Right cardiac atrium (tissue), 5 donors: ENCODE measurements at regions of chr1 and their contacts with region 1.

Region 1: GRCh38 chr1:3403388-3404231 is 50.9 kb upstream of the ARHGEF16 start:
- DNase-seq: peak in 1 of 3 donors; percentile 40
- ATAC-seq: no peak
- H3K4me3 ChIP-seq: no peak overlapping the region
- H3K27ac ChIP-seq: no peak overlapping the region
- H3K4me1 ChIP-seq: no peaks in the 10 kb centered on the region
- H3K27me3 ChIP-seq: no peaks in the 10 kb centered on the region

Region 2: GRCh38 chr1:2882968-2883696 is 520.5 kb before region 1 on chr1:
- intact Hi-C with region 1: loop called in 1 of 4 experiments (anchors 10 kb)
- DNase-seq: no peak
- ATAC-seq: no peak
- H3K4me3 ChIP-seq: no peak overlapping the region
- H3K27ac ChIP-seq: no peak overlapping the region
- H3K4me1 ChIP-seq: no peaks in the 10 kb centered on the region
- H3K27me3 ChIP-seq: no peaks in the 10 kb centered on the region

Region 3: DNA sequence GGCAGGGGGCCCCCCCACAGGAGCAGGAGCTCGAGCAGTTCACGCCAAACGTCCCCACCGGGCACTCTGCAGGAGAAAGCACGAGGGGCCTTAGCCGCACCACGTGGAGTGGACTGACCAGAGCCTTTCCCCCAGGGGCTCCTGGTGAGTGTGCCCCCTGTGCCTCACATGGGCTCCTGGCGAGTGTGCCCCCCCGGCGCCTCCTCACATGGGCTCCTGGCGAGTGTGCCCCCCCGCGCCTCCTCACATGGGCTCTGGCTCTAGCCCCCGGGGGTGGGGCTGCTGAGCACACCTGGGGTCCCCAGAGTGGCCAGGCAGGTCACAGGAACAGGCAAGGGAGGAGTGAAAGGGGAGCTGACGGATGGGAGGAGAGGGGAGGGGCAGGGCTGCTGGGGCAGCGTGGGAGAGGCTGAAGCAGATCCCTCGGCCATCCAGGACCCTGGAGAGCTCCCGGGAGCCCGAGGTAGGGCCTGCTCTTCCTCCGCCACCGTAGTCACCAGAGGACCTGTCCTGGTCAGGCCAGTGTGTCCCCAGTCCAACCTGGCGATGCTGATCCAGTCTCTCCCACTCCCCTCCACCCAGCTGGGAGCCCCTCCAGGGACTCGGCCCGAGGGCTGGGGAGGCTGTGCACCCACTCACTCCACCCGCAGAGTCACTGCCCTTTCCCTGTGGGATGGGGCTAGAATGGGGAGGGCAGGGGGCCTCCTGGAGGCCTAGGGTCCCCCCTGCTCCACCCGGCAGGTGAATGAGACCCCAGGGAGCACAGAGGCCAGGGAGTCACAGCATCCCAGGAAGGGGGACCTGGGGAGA is 98.5 kb after region 1 on chr1:
- intact Hi-C with region 1: no loop called
- DNase-seq: peak; percentile 59 to 88 (median 88)
- ATAC-seq: peak; percentile 79 to 87
- H3K4me3 ChIP-seq: no peak overlapping the region
- H3K27ac ChIP-seq: no peak overlapping the region
- H3K4me1 ChIP-seq: no peaks in the 10 kb centered on the region
- H3K27me3 ChIP-seq: no peaks in the 10 kb centered on the region